Posterior cingulate gyrus (tissue), 11 donors: ENCODE measurements at regions of chr7 and their contacts with region 1.

Region 1: GRCh38 chr7:32495298-32496176 is at the start of gene AVL9:
- DNase-seq: peak; percentile 94 to 100 (median 98)

Region 2: DNA sequence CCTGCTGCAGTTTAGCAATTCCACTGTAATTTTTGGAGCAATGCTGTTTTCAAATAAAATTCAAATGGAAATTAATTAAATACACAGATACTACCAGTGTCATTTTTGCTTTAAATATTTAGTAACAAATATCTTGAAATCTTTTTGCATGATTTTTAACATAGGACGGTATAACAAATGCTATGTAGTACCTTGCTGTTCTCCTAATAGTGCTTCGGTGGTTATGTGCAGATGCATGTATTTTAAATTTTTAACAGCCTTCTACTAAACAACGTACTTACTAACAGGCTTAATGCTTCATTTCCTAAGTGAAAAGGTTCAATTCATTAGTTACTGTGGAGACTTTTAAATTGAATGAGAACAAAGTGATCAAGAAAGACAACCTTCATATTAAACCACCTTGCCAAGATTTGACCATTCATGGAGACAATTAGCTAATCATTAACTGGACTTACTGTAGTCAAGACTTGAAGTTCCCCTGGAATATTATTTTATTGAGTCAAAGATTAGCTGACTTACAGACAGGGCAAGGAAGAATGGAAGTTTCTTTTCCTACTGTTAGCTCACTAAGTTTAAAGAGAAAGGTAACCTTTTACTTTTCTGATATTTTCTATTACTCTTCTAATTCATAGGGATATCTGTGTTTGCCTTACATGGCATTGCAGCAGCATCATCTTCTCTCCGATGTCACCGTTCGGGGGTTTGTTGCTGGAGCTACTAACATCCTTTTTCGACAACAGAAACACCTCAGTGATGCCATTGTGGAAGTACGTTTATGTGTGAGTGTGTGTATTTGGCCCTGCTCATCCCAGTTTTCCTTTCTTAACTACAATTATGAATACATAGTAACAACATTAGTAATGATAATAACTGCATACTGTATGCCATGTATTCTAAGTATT is 74.1 kb after region 1 on chr7:
- intact Hi-C with region 1: loop called (anchors 5 kb)
- DNase-seq: no peak